ENCODE measurements at regions of chr1 and their contacts with region 1.

Region 1: DNA sequence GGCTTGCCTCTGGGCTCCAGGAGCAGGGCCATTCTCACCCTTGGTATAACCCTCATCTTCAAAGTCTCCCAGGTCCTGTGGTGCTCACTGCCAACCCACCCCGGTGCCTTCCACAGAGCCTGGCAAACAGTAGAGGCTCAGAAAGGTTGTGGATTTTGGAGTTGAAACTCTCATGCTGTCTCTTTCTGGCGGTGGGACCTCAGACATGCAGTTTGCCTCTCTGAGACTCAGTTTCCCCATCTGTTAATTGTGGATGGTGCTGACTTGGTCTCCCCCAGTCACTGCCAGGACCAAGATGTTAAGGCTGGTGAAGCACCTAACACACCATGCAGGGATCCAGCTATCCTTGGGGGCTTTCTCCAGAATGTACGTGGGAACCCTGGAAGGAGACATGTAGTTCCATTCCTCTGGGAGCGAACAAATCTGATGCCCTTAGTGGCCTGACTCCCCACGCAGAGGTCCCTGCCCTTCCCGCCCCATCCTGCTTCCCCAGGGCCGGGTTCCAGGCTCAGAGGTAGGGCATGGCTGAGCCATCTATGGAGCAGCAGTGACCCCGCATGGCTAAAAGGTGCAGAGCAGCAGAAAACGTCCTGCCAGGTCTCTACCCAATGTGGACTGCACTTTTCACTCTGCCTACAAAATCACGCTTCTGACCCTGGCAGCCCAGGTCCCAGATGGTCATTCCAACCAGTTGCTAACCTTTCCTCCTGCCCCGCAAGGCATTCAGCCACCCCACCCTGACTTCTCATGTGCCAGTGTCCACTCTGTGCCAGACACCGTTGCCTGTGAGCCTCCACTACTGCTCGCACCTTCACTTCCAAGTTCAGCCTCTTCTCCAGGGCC is 9.2 kb upstream of the TTC22 start:
- DNase-seq: peak; percentile 43 to 59 (median 53)
- H3K4me3 ChIP-seq: no peak overlapping the region
- H3K4me3 Mint-ChIP-seq: no peak overlapping the region
- H3K27ac ChIP-seq: no peak overlapping the region
- H3K27ac Mint-ChIP-seq: no peak overlapping the region
- H3K4me1 ChIP-seq: no peaks in the 10 kb centered on the region
- H3K4me1 Mint-ChIP-seq: peaks cover 6 to 20% (median 9%) of the 10 kb centered on the region in 4 donors
- H3K27me3 ChIP-seq: no peaks in the 10 kb centered on the region
- H3K27me3 Mint-ChIP-seq: peaks cover 0 to 3% of the 10 kb centered on the region in 2 donors

Region 2: DNA sequence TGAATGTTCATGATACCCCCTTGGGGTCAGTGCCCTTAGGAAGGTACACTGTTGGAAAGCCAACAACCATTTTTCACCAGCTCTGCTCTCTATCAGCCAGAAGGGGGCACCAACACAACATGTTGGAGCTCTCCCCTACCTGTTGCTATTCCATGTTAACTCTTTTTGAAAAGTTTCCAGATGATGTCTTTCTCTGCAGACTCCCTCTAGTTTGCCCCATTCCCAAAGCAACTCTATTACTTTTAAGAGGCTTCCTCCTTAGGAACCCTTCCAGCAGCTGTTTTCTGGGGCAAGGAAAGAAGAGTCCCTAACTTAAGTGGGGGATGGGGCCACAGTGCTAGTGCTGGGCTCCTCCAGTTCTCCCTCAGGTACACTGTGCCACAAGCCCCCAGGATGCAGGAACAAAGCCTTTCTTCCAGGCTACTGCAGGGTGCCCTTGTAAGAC is 949.3 kb before region 1 on chr1:
- CTCF ChIA-PET with region 1: interaction called, 5 read pairs
- POLR2A ChIA-PET with region 1: no interaction called
- intact Hi-C with region 1: loop called (anchors 1 kb)
- DNase-seq: peak; percentile 49 to 59 (median 56)
- H3K4me3 ChIP-seq: no peak overlapping the region
- H3K4me3 Mint-ChIP-seq: no peak overlapping the region
- H3K27ac ChIP-seq: no peak overlapping the region
- H3K27ac Mint-ChIP-seq: peak overlapping the region in 1 of 7 donors; percentile 25
- H3K4me1 ChIP-seq: no peaks in the 10 kb centered on the region
- H3K4me1 Mint-ChIP-seq: peaks cover 0 to 16% (median 4%) of the 10 kb centered on the region in 4 donors
- H3K27me3 ChIP-seq: no peaks in the 10 kb centered on the region
- H3K27me3 Mint-ChIP-seq: no peaks in the 10 kb centered on the region

Region 3: DNA sequence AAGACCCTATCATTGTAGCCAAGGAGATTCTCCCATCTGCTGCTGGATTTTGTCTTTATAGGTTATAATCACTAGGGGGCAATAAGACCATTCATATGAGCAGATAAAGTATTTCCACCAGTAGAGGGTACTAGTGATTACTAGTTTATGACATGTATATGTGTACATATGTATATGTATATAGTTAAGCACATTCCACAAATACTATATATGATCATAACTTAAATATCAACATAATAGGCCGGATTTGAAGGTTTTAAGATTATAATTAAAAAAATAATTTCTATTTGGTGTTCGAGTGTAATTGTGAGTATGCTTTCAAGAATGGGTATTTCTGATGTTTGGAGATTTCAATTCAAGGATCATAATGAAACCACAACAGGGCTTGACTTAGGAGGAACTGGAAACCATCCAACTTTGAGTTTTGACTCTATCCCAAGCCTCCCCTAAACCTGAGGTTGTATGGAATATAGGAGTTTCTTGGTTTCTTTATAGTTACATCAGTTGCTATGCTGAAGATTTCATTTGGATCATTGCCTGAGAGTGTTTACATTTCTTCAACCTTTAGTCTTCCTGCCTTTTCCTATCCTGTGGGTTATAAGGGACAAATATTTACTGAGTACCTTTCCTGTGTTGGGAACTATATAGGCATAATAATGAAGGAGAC is 740.0 kb before region 1 on chr1:
- CTCF ChIA-PET with region 1: interaction called, 6 read pairs
- POLR2A ChIA-PET with region 1: no interaction called
- intact Hi-C with region 1: loop called (anchors 1 kb)
- DNase-seq: peak in 4 of 5 donors; percentile 55 to 61 (median 56)
- H3K4me3 ChIP-seq: no peak overlapping the region
- H3K4me3 Mint-ChIP-seq: peak overlapping the region in 1 of 8 donors; percentile 0
- H3K27ac ChIP-seq: no peak overlapping the region
- H3K27ac Mint-ChIP-seq: peak overlapping the region in 1 of 7 donors; percentile 2
- H3K4me1 ChIP-seq: no peaks in the 10 kb centered on the region
- H3K4me1 Mint-ChIP-seq: peaks cover 0 to 2% (median 0%) of the 10 kb centered on the region in 4 donors
- H3K27me3 ChIP-seq: no peaks in the 10 kb centered on the region
- H3K27me3 Mint-ChIP-seq: no peaks in the 10 kb centered on the region

Region 4: DNA sequence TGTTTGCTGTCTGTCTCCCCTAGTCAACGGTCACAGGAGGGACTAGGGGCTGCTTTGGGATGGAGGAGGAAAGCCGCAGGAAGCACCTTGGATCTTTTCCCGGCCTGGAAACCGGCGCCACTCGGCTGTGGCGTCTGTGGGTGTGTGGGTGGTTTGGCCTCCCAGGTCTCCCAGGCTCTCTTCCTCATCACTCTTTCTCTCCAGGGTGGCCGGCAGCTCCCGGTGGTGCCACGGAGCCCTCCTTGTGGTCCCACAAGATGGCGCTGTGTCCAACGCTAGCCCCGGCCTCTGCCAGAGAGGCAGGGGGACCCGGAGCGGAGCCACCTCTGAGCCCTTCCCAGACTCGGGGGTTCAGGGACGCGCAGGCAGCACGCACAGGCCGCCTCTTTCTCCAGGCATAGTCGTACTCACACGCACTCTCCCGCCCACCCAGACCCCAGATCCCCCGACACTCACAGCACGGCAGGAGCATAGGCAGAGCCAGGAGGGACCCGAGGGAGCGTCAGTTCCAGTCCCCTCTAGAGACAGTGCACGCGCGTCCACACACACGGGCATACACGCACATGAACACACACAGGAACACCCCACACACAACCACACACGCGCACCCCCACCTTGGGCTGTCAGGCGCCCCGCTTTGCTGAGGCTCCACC is 688.7 kb before region 1 on chr1:
- CTCF ChIA-PET with region 1: no interaction called
- POLR2A ChIA-PET with region 1: no interaction called
- intact Hi-C with region 1: loop called (anchors 2 kb)
- DNase-seq: peak in 4 of 5 donors; percentile 36 to 56 (median 45)
- H3K4me3 ChIP-seq: no peak overlapping the region
- H3K4me3 Mint-ChIP-seq: peak overlapping the region in 3 of 8 donors; percentile 31 to 49 (median 37)
- H3K27ac ChIP-seq: no peak overlapping the region
- H3K27ac Mint-ChIP-seq: peak overlapping the region in 1 of 7 donors; percentile 41
- H3K4me1 ChIP-seq: no peaks in the 10 kb centered on the region
- H3K4me1 Mint-ChIP-seq: peaks cover 0 to 11% (median 7%) of the 10 kb centered on the region in 4 donors
- H3K27me3 ChIP-seq: peaks cover 3% of the 10 kb centered on the region
- H3K27me3 Mint-ChIP-seq: no peaks in the 10 kb centered on the region

Region 5: DNA sequence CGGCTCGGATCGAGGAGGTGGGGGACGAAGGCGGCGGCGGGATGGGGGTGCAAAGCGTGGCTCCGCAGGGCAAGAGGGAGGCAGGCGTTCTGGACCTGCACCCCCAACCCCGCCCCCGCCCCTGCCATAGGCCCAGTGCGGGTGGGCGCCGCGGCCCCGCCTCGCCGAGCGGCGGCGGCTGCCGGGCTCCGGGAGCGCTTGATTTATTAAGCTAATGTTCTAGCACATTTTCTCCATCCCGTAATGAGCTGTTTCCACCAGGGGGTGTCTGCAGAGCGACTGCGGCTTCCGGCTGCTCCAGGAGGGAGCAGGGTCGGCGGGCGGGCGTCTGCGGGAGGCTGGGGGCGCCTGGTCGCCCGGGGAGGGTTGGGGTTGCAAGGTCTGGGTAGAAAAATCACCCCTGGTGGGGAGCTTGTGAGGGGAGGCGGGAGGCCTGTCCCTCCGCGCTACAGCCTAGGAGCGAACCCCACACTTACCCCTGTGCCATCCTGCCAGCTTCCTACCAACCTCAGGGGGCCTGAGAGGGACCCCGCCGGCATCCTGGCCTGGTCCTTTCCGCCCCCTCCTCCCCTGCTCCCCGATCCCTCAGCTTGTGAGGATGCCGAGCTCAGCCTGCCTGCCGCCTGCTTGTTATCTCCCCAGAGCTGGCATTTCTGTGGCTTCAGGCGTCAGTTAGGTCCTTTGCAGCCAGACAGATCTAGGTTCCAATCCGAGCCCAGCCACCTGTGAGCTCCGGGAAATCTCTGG is 310.8 kb before region 1 on chr1:
- CTCF ChIA-PET with region 1: interaction called, 9 read pairs
- POLR2A ChIA-PET with region 1: no interaction called
- intact Hi-C with region 1: loop called (anchors 1 kb)
- DNase-seq: peak; percentile 36 to 54 (median 43)
- H3K4me3 ChIP-seq: peak overlapping the region in 1 of 2 donors; percentile 24
- H3K4me3 Mint-ChIP-seq: peak overlapping the region; percentile 39 to 82 (median 70)
- H3K27ac ChIP-seq: no peak overlapping the region
- H3K27ac Mint-ChIP-seq: no peak overlapping the region
- H3K4me1 ChIP-seq: peaks cover 13% of the 10 kb centered on the region
- H3K4me1 Mint-ChIP-seq: peaks cover 3 to 9% (median 5%) of the 10 kb centered on the region in 4 donors
- H3K27me3 ChIP-seq: peaks cover 6% of the 10 kb centered on the region
- H3K27me3 Mint-ChIP-seq: peaks cover 35% of the 10 kb centered on the region in 2 donors

Region 6: DNA sequence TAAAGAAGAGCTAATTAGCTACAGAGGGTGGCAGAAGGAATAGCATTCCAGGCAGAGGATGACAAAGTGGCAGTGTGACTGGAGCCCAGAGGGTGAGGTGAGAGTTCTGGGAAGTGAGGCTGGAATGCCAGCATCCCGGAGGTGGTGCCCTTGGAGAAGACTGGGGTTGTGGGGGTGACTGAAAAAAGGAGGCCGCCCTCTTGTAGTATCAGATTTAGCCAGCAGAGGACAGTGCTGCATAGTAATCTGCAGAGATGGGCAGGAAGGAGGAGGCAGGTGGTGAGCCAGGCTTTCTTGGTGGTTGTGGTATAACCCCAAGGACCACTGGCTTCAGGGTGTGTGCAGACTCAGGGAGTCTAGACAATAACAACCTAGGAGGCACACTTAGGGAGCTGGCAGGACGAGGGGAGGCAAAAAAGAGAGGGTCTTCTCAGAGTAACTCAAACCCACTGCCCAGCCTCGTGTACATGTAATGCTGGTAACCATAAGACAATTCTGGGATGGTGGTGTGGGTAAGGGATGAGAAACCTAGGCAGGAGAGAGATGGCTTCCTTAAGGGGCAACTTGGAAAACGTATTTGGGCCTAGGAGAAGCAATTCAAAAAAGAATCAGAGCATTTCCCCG is 138.2 kb before region 1 on chr1:
- CTCF ChIA-PET with region 1: interaction called, 21 read pairs
- POLR2A ChIA-PET with region 1: no interaction called
- intact Hi-C with region 1: loop called (anchors 1 kb)
- DNase-seq: peak; percentile 51 to 66 (median 58)
- H3K4me3 ChIP-seq: no peak overlapping the region
- H3K4me3 Mint-ChIP-seq: no peak overlapping the region
- H3K27ac ChIP-seq: no peak overlapping the region
- H3K27ac Mint-ChIP-seq: peak overlapping the region in 2 of 7 donors; percentile 46 to 56
- H3K4me1 ChIP-seq: no peaks in the 10 kb centered on the region
- H3K4me1 Mint-ChIP-seq: peaks cover 1 to 6% (median 4%) of the 10 kb centered on the region in 4 donors
- H3K27me3 ChIP-seq: no peaks in the 10 kb centered on the region
- H3K27me3 Mint-ChIP-seq: peaks cover 0 to 6% of the 10 kb centered on the region in 2 donors